GM12878 (cell line): ENCODE measurements at regions of chrX and their contacts with region 1.

Region 1: DNA sequence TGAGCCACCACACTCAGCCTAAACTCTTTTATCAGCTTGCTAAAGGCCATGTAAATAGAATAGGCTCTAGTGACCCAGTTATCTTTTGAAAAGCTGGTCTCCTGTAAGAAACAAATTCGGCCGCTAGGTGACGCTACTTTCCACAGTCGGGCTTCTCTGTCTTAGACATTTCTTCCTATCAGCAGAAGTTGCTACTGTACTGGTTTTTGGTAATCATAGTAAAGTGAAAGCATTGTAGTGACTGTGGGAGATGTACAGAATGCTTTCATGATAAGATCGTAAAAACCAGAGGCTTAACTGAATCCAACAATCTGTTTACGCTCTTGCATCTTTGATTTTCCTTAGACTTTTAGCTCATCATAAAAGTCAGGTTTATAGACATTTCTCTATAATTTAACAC is 82.6 kb downstream of the GK start:
- DNase-seq: peak; percentile 35
- ATAC-seq: peak; percentile 97
- H3K4me3 ChIP-seq: no peak overlapping the region
- H3K27ac ChIP-seq: no peak overlapping the region
- H3K4me1 ChIP-seq: no peaks in the 10 kb centered on the region
- H3K27me3 ChIP-seq: no peaks in the 10 kb centered on the region
- CTCF ChIP-seq: peak; percentile 83 to 88 (median 88)
- EP300 ChIP-seq: no peak
- POLR2A ChIP-seq: no peak
- RAD21 ChIP-seq: peak; percentile 91

Region 2: DNA sequence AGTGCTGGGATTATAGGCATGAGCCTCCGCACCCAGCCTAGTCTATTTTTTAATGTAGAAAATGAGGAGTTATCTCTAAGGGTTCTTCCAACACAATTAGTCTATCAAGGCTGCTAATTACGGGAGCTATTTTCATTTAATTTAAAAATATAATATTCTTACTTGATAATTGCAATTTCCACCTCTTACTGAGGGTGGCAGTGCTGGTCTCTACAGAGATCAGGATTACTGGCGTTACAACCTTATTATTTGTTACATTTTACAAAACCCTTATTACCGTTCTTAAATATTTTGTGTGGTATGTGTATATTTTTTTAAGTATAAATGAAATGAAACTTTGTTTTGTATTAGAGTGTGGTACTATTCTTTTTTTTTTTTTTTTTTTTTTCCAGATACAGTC is 100.2 kb before region 1 on chrX:
- CTCF ChIA-PET with region 1: interaction called, 21 read pairs
- POLR2A ChIA-PET with region 1: interaction called, 3 read pairs
- RAD21 ChIA-PET with region 1: interaction called, 10 read pairs
- SMC1A ChIA-PET with region 1: interaction called, 8 read pairs
- in situ Hi-C with region 1: no loop called
- intact Hi-C with region 1: no loop called
- DNase-seq: no peak
- ATAC-seq: peak; percentile 42; the same call in 2 of the 3 replicates
- H3K4me3 ChIP-seq: no peak overlapping the region
- H3K27ac ChIP-seq: no peak overlapping the region
- H3K4me1 ChIP-seq: no peaks in the 10 kb centered on the region
- H3K27me3 ChIP-seq: no peaks in the 10 kb centered on the region
- CTCF ChIP-seq: peak; percentile 27 to 43 (median 36); a peak in 4 of 6 replicates
- EP300 ChIP-seq: no peak
- POLR2A ChIP-seq: no peak
- RAD21 ChIP-seq: peak; percentile 55

Region 3: GRCh38 chrX:30812326-30812725 is 76.5 kb after region 1 on chrX:
- CTCF ChIA-PET with region 1: interaction called, 22 read pairs
- POLR2A ChIA-PET with region 1: no interaction called
- RAD21 ChIA-PET with region 1: interaction called, 5 read pairs
- SMC1A ChIA-PET with region 1: interaction called, 12 read pairs
- in situ Hi-C with region 1: no loop called
- intact Hi-C with region 1: no loop called
- DNase-seq: no peak
- ATAC-seq: peak; percentile 99
- H3K4me3 ChIP-seq: no peak overlapping the region
- H3K27ac ChIP-seq: no peak overlapping the region
- H3K4me1 ChIP-seq: peaks cover 3% of the 10 kb centered on the region; the same call in 1 of the 2 replicates
- H3K27me3 ChIP-seq: no peaks in the 10 kb centered on the region
- CTCF ChIP-seq: no peak
- EP300 ChIP-seq: no peak
- POLR2A ChIP-seq: no peak
- RAD21 ChIP-seq: no peak

Region 4: GRCh38 chrX:30865015-30865414 is 129.2 kb after region 1 on chrX:
- CTCF ChIA-PET with region 1: interaction called, 36 read pairs
- POLR2A ChIA-PET with region 1: no interaction called
- RAD21 ChIA-PET with region 1: interaction called, 19 read pairs
- SMC1A ChIA-PET with region 1: interaction called, 15 read pairs
- in situ Hi-C with region 1: no loop called
- intact Hi-C with region 1: loop called (anchors 2 kb)
- DNase-seq: no peak
- ATAC-seq: peak; percentile 82
- H3K4me3 ChIP-seq: no peak overlapping the region
- H3K27ac ChIP-seq: no peak overlapping the region
- H3K4me1 ChIP-seq: no peaks in the 10 kb centered on the region
- H3K27me3 ChIP-seq: no peaks in the 10 kb centered on the region
- CTCF ChIP-seq: peak; percentile 24 to 36 (median 29); a peak in 4 of 6 replicates
- EP300 ChIP-seq: no peak
- POLR2A ChIP-seq: no peak
- RAD21 ChIP-seq: 0 out of 2 replicates have a peak, but pooled peaks have one; percentile 9

Region 5: GRCh38 chrX:30971774-30972603 is 236.2 kb after region 1 on chrX:
- CTCF ChIA-PET with region 1: interaction called, 10 read pairs
- POLR2A ChIA-PET with region 1: no interaction called
- RAD21 ChIA-PET with region 1: interaction called, 4 read pairs
- SMC1A ChIA-PET with region 1: interaction called, 3 read pairs
- in situ Hi-C with region 1: no loop called
- intact Hi-C with region 1: loop called (anchors 10 kb)
- DNase-seq: no peak
- ATAC-seq: peak; percentile 99
- H3K4me3 ChIP-seq: no peak overlapping the region
- H3K27ac ChIP-seq: no peak overlapping the region
- H3K4me1 ChIP-seq: no peaks in the 10 kb centered on the region
- H3K27me3 ChIP-seq: no peaks in the 10 kb centered on the region
- CTCF ChIP-seq: peak; percentile 77 to 80 (median 79)
- EP300 ChIP-seq: no peak
- POLR2A ChIP-seq: no peak
- RAD21 ChIP-seq: peak; percentile 51

Region 6: GRCh38 chrX:31658360-31658759 is 922.5 kb after region 1 on chrX:
- CTCF ChIA-PET with region 1: interaction called, 6 read pairs
- POLR2A ChIA-PET with region 1: no interaction called
- RAD21 ChIA-PET with region 1: interaction called, 6 read pairs
- SMC1A ChIA-PET with region 1: interaction called, 7 read pairs
- in situ Hi-C with region 1: loop called (anchors 10 kb)
- intact Hi-C with region 1: loop called (anchors 5 kb)
- DNase-seq: no peak
- ATAC-seq: peak; percentile 65
- H3K4me3 ChIP-seq: no peak overlapping the region
- H3K27ac ChIP-seq: no peak overlapping the region
- H3K4me1 ChIP-seq: no peaks in the 10 kb centered on the region
- H3K27me3 ChIP-seq: no peaks in the 10 kb centered on the region
- CTCF ChIP-seq: peak; percentile 24 to 61 (median 40); a peak in 4 of 6 replicates
- EP300 ChIP-seq: no peak
- POLR2A ChIP-seq: no peak
- RAD21 ChIP-seq: peak; percentile 64